ENCODE measurements at regions of chr11 and their contacts with region 1.

Region 1: GRCh38 chr11:9506489-9507276 is 45.9 kb downstream of the ZNF143 start:
- DNase-seq: peak; percentile 85
- ATAC-seq: peak; percentile 79
- H3K4me3 Mint-ChIP-seq: no peak overlapping the region
- H3K27ac Mint-ChIP-seq: no peak overlapping the region
- H3K4me1 Mint-ChIP-seq: peaks cover 8% of the 10 kb centered on the region
- H3K27me3 Mint-ChIP-seq: no peaks in the 10 kb centered on the region

Region 2: DNA sequence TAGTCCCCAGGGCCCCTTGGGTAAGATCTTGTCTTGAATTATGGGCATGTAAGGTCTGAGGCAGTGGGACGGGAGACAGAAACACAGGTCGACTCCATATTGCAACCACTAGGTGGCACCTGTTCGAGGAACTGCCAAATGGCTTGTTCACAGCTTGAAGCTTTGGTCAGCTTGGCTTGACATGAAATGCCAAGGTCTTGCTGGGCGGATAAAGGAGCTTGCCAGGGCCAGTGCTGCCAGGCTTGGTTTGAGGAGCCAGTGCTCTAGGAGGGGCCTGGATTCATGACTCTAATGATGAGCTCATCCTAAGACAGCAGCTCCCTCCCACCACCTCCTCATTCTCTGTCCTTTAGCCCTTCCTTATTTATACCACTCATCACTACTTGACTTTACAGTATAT is 491.0 kb before region 1 on chr11:
- CTCF ChIA-PET with region 1: interaction called, 54 read pairs
- POLR2A ChIA-PET with region 1: no interaction called
- DNase-seq: peak; percentile 73
- ATAC-seq: peak; percentile 93
- H3K4me3 Mint-ChIP-seq: no peak overlapping the region
- H3K27ac Mint-ChIP-seq: no peak overlapping the region
- H3K4me1 Mint-ChIP-seq: peaks cover 20% of the 10 kb centered on the region
- H3K27me3 Mint-ChIP-seq: peaks cover 15% of the 10 kb centered on the region

Region 3: GRCh38 chr11:9137293-9138132 is 369.2 kb before region 1 on chr11:
- CTCF ChIA-PET with region 1: interaction called, 17 read pairs
- POLR2A ChIA-PET with region 1: no interaction called
- DNase-seq: peak; percentile 74
- ATAC-seq: peak; percentile 91
- H3K4me3 Mint-ChIP-seq: no peak overlapping the region
- H3K27ac Mint-ChIP-seq: no peak overlapping the region
- H3K4me1 Mint-ChIP-seq: peaks cover 5% of the 10 kb centered on the region
- H3K27me3 Mint-ChIP-seq: no peaks in the 10 kb centered on the region

Region 4: DNA sequence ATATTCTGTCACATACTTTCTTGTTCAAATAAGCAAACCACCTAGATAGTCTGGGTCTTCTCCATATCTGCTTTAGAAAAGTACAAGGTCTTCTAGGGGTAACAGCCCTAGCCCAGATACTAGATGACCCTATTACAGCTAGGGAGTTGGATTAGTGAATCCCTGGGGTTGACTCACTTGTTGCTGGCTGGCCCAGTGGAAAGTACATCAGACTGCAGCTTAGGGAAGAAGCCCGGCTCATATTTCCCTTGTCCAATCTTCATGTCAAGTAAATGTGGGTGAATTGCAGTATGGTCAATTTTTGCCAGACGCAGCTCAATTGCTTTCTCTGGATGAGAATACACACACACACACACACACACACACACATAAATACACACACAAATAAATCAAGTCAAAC is 336.2 kb before region 1 on chr11:
- CTCF ChIA-PET with region 1: interaction called, 52 read pairs
- POLR2A ChIA-PET with region 1: no interaction called
- DNase-seq: no peak
- ATAC-seq: no peak
- H3K4me3 Mint-ChIP-seq: no peak overlapping the region
- H3K27ac Mint-ChIP-seq: no peak overlapping the region
- H3K4me1 Mint-ChIP-seq: peaks cover 16% of the 10 kb centered on the region
- H3K27me3 Mint-ChIP-seq: no peaks in the 10 kb centered on the region

Region 5: DNA sequence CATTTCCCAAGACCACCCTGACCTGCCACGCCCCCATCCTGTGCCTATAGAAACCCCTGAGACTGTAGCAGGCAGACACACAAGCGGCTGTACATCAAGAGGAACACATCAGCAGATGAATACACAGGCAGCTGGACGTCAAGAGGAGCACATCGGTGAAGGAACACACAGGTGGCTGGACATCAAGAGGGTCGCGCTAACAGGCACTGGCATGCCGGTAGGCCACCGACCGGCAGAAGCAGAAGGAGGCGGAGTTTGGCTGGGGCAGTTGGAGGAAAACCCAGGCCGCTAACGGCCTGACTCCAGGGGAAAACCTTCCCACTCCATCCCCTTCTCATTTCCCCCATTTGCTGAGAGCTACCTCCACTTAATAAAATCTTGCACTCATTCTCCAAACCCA is 127.6 kb before region 1 on chr11:
- CTCF ChIA-PET with region 1: no interaction called
- POLR2A ChIA-PET with region 1: no interaction called
- DNase-seq: no peak
- ATAC-seq: no peak
- H3K4me3 Mint-ChIP-seq: no peak overlapping the region
- H3K27ac Mint-ChIP-seq: no peak overlapping the region
- H3K4me1 Mint-ChIP-seq: peaks cover 6% of the 10 kb centered on the region
- H3K27me3 Mint-ChIP-seq: no peaks in the 10 kb centered on the region

Region 6: DNA sequence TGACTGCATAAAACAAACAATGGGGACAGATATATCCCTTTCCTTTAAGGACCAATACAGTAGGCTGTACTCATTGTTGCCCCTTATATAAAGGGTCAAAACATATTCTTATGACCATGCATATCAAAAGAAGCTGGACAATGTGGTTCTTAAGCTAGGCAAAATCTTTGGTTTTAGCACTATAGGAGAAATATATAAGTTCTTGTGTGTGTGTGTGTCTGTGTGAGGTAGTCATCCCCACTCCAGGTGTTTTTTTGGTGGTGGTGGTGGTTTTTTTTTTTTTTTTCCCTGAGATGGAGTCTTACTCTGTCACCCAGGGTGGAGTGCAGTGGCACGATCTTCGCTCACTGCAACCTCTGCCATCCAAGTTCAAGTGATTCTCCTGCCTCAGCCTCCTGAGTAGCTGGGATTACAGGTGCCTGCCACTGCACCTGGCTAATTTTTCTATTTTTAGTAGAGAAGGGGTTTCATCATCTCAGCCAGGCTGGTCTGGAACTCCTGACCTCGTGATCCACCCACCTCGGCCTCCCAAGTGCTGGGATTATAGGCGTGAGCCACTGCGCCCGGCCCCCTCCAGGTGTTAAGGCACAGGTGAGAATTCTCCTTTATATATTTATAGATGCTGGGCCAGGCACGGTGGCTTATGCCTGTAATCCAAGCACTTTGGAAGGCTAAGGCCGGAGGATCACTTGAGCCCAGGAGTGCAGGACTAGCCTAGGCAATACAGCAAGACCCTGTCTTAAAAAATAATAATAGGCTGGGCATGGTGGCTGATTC is 57.9 kb before region 1 on chr11:
- CTCF ChIA-PET with region 1: no interaction called
- POLR2A ChIA-PET with region 1: no interaction called
- DNase-seq: no peak
- ATAC-seq: no peak
- H3K4me3 Mint-ChIP-seq: no peak overlapping the region
- H3K27ac Mint-ChIP-seq: no peak overlapping the region
- H3K4me1 Mint-ChIP-seq: peaks cover 11% of the 10 kb centered on the region
- H3K27me3 Mint-ChIP-seq: no peaks in the 10 kb centered on the region

Region 7: GRCh38 chr11:9473408-9473807 is 33.3 kb before region 1 on chr11:
- CTCF ChIA-PET with region 1: interaction called, 10 read pairs
- POLR2A ChIA-PET with region 1: no interaction called
- DNase-seq: no peak
- ATAC-seq: no peak
- H3K4me3 Mint-ChIP-seq: no peak overlapping the region
- H3K27ac Mint-ChIP-seq: no peak overlapping the region
- H3K4me1 Mint-ChIP-seq: no peaks in the 10 kb centered on the region
- H3K27me3 Mint-ChIP-seq: no peaks in the 10 kb centered on the region

Region 8: DNA sequence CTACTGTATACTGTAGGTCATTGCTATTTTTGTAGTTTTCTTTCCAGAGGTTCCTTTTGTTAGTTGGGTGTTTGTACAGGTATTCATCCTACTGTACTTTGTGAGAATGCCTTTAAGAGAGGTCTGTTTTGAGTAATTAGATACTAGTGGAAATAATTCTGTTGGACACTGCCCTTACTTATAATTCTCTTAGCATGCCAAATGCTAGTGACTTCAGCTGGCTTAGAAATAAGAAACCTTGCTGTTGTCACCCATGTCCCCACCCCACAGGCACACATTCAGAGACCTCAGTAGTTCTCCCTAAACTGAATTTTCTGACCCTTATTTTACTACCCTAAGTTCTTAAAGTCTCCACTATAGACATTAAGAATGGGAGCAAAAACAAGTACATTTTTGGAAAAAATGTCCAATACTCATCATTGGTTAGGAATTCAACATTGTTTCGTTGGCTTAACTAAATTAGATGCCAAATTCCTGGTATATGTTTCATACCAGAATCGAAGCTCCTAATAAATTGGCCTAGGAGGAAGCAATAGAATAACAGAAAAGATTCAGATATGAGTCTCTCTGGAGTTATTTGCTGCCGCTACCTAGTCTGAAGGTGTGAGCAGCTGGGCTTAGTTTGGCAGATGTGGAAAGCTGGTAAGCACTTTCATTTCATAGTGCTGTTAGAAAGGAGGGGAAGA is 17.5 kb before region 1 on chr11:
- CTCF ChIA-PET with region 1: interaction called, 22 read pairs
- POLR2A ChIA-PET with region 1: no interaction called
- DNase-seq: no peak
- ATAC-seq: no peak
- H3K4me3 Mint-ChIP-seq: no peak overlapping the region
- H3K27ac Mint-ChIP-seq: no peak overlapping the region
- H3K4me1 Mint-ChIP-seq: no peaks in the 10 kb centered on the region
- H3K27me3 Mint-ChIP-seq: no peaks in the 10 kb centered on the region

Region 9: DNA sequence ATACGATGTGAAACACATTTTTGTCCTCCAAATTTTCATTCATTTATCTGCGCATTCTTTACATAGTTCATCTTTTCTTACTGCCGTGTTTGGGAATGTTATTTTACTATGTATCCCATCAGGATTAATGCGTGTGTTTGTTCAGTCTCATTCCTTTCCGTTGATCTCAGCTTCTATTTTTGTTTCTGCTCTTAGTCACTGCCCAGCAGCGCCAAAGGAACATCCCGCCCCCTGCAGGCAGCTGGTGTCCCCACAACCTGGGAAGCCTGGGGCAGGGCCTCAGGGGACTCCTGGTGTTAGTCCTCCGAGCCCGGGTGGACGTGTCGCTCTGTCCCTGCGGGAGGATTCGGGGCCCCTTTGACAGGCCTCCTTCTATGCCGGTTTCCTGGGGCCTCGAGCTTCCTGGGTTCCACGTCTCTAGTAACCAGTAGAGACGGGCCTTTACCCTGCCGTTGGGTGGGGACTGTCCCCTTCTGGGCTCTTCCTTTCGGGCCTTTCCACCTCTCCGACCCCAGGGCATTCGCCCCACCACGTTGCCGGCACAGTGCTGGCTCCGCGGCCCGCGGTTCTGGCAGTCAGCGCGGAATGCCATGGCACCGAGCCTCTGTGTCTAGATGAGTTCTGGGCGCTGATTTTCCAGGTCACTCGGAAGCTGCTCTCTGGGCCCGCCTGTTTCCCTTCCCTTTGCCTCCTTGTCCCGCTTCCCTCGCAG is 106.6 kb after region 1 on chr11:
- CTCF ChIA-PET with region 1: interaction called, 20 read pairs
- POLR2A ChIA-PET with region 1: no interaction called
- DNase-seq: peak; percentile 91
- ATAC-seq: peak; percentile 76
- H3K4me3 Mint-ChIP-seq: peak overlapping the region; percentile 82
- H3K27ac Mint-ChIP-seq: peak overlapping the region; percentile 94
- H3K4me1 Mint-ChIP-seq: peaks cover 27% of the 10 kb centered on the region
- H3K27me3 Mint-ChIP-seq: peaks cover 4% of the 10 kb centered on the region

Region 10: DNA sequence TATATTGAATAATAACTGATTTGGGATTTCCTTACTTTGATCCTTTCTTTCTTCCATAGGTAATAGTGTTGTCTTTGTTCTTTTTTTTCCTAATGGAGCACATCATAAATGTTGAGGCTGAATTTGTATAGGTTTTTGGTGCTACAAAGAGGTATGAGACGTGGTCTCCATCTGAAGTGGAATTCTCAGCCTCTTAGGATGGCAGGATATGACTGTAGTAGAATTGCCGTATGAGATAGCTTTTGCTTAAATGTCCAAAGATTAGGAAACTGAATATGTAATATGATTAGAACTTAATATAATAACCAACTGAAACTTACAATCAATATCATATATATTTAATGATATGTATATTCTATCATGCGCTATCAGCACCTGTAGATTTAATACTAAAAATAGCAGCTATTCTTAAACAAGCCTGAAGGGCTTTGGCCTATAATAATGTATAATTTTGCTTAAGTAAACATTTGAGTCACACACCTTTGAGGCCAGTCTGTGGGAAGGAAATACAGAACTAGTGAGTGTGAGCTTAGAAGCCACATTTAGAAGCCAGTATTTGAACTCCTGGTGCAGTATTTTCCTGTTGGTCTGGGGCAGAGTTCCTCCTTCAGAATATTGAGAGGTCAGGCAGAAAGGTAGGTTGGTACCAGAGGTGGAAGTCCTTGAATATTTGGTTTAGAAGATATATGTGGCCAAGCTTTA is 219.8 kb after region 1 on chr11:
- CTCF ChIA-PET with region 1: no interaction called
- POLR2A ChIA-PET with region 1: no interaction called
- DNase-seq: no peak
- ATAC-seq: no peak
- H3K4me3 Mint-ChIP-seq: no peak overlapping the region
- H3K27ac Mint-ChIP-seq: no peak overlapping the region
- H3K4me1 Mint-ChIP-seq: peaks cover 6% of the 10 kb centered on the region
- H3K27me3 Mint-ChIP-seq: no peaks in the 10 kb centered on the region